ENCODE measurements at regions of chr17 and their contacts with region 1.

Region 1: GRCh38 chr17:80147035-80147836 is at the start of gene EIF4A3:
- DNase-seq: peak; percentile 98 to 99 (median 99)
- ATAC-seq: peak; percentile 98 to 99 (median 99)
- H3K4me3 ChIP-seq: peak within 1 kb of the TSS; percentile 69 to 100 (median 97)
- H3K27ac ChIP-seq: peak within 1 kb of the TSS; percentile 80 to 99 (median 95)
- H3K4me1 ChIP-seq: peaks cover 0 to 32% (median 22%) of the 10 kb centered on the region in 12 donors
- H3K27me3 ChIP-seq: no peaks in the 10 kb centered on the region
- CTCF ChIP-seq: peak in 6 of 12 donors; percentile 1 to 25 (median 18)
- POLR2A ChIP-seq: peak in 1 of 2 donors; percentile 98
- total RNA-seq, gene EIF4A3: 20.4 to 45.1 (median 31.6) TPM

Region 2: GRCh38 chr17:80101011-80101945 is 46.0 kb before region 1 on chr17 and contains the start of gene GAA:
- intact Hi-C with region 1: loop called in 3 of 10 experiments (anchors 5 kb)
- DNase-seq: peak; percentile 89 to 96 (median 89)
- ATAC-seq: peak; percentile 75 to 91 (median 84)
- H3K4me3 ChIP-seq: peak within 1 kb of the TSS; percentile 68 to 99 (median 90)
- H3K27ac ChIP-seq: peak within 1 kb of the TSS; percentile 36 to 98 (median 91)
- H3K4me1 ChIP-seq: peaks cover 0 to 23% (median 7%) of the 10 kb centered on the region in 12 donors
- H3K27me3 ChIP-seq: no peaks in the 10 kb centered on the region
- CTCF ChIP-seq: peak; percentile 50 to 98 (median 88)
- POLR2A ChIP-seq: peak in 1 of 2 donors; percentile 82
- total RNA-seq, gene GAA: 27.5 to 109 (median 48.0) TPM

Region 3: GRCh38 chr17:80124351-80124981 is 22.8 kb before region 1 on chr17:
- intact Hi-C with region 1: no loop called
- DNase-seq: no peak
- ATAC-seq: peak in 2 of 4 donors; percentile 30 to 52
- H3K4me3 ChIP-seq: no peak overlapping the region
- H3K27ac ChIP-seq: no peak overlapping the region
- H3K4me1 ChIP-seq: no peaks in the 10 kb centered on the region
- H3K27me3 ChIP-seq: no peaks in the 10 kb centered on the region
- CTCF ChIP-seq: no peak
- POLR2A ChIP-seq: no peak

Region 4: GRCh38 chr17:80195731-80196529 is 48.7 kb after region 1 on chr17:
- intact Hi-C with region 1: loop called in 2 of 10 experiments (anchors 5 to 10 kb)
- DNase-seq: no peak
- ATAC-seq: no peak
- H3K4me3 ChIP-seq: no peak overlapping the region
- H3K27ac ChIP-seq: no peak overlapping the region
- H3K4me1 ChIP-seq: peaks cover 0 to 19% (median 10%) of the 10 kb centered on the region in 12 donors
- H3K27me3 ChIP-seq: peaks cover 0 to 4% (median 0%) of the 10 kb centered on the region in 9 donors
- CTCF ChIP-seq: peak; percentile 55 to 93 (median 74)
- POLR2A ChIP-seq: no peak

Region 5: DNA sequence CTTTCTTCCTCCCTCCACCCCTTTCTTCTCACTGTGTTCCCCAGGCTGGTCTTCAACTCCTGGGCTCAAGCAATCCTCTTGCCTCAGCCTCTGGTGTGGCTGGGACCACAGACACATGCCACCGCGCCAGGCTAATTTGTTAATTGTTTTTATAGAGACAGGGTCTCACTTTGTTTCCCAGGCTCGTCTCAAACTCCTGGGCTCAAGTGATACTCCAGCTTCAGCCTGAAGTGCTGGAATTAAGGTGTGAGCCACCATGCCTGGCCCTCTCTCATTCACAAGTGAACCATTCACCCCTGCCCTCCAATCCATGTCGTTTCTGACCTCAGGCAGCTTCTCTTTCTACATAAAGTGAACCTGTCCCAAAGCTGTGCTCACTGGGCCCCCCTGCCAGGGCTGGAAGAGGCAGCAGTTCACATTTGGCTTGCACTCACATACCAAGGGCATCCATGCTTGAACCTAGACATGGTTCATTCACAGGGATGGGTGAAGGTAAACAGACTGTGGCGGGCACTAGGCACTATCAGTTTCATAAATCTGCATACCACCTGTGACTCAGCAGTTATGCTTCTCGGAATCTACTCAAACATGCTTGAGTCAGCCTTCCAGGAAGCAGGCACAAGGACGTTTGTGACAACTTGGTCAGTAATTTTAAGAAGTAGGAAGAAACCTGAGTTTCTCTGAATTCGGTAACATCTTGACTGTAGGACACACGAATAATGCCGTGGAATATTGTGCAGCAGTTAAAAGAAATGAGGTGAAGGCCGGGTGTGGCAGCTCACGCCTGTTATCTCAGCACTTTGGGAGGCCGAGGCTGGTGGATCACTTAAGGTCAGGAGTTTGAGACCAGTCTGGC is 107.4 kb after region 1 on chr17:
- intact Hi-C with region 1: loop called in 1 of 10 experiments (anchors 5 kb)
- DNase-seq: no peak
- ATAC-seq: peak in 3 of 4 donors; percentile 28 to 52 (median 49)
- H3K4me3 ChIP-seq: no peak overlapping the region
- H3K27ac ChIP-seq: peak overlapping the region in 2 of 12 donors; percentile 17 to 90
- H3K4me1 ChIP-seq: peaks cover 0 to 37% (median 3%) of the 10 kb centered on the region in 12 donors
- H3K27me3 ChIP-seq: no peaks in the 10 kb centered on the region
- CTCF ChIP-seq: no peak
- POLR2A ChIP-seq: no peak

Region 6: GRCh38 chr17:80364216-80364618 is 217.0 kb after region 1 on chr17:
- intact Hi-C with region 1: loop called in 1 of 10 experiments (anchors 10 kb)
- DNase-seq: peak in 1 of 5 donors; percentile 27
- ATAC-seq: peak in 2 of 4 donors; percentile 15 to 30
- H3K4me3 ChIP-seq: no peak overlapping the region
- H3K27ac ChIP-seq: no peak overlapping the region
- H3K4me1 ChIP-seq: peaks cover 0 to 15% (median 0%) of the 10 kb centered on the region in 12 donors
- H3K27me3 ChIP-seq: no peaks in the 10 kb centered on the region
- CTCF ChIP-seq: peak in 5 of 12 donors; percentile 14 to 45 (median 35)
- POLR2A ChIP-seq: no peak

Measured in heart left ventricle (tissue), 16 donors.